Activated naive CD4-positive, alpha-beta T cell treated with anti-CD3 and anti-CD28 coated beads for 36 hours (primary cell): ENCODE measurements at regions of chr2 and their contacts with region 1.

Region 1: GRCh38 chr2:84870306-84870705 is 10.6 kb downstream of the TRABD2A start:
- DNase-seq: no peak
- H3K4me3 Mint-ChIP-seq: no peak overlapping the region
- H3K27ac Mint-ChIP-seq: peak overlapping the region; percentile 6
- H3K4me1 Mint-ChIP-seq: peaks cover 89% of the 10 kb centered on the region
- H3K27me3 Mint-ChIP-seq: no peaks in the 10 kb centered on the region

Region 2: GRCh38 chr2:84459018-84459943 is 411.0 kb before region 1 on chr2 and contains the start of gene SUCLG1:
- CTCF ChIA-PET with region 1: no interaction called
- intact Hi-C with region 1: no loop called
- DNase-seq: peak; percentile 89
- H3K4me3 Mint-ChIP-seq: peak within 1 kb of the TSS; percentile 86
- H3K27ac Mint-ChIP-seq: peak within 1 kb of the TSS; percentile 92
- H3K4me1 Mint-ChIP-seq: peaks cover 40% of the 10 kb centered on the region
- H3K27me3 Mint-ChIP-seq: no peaks in the 10 kb centered on the region
- total RNA-seq, gene SUCLG1: 75.3 to 80.7 TPM

Region 3: DNA sequence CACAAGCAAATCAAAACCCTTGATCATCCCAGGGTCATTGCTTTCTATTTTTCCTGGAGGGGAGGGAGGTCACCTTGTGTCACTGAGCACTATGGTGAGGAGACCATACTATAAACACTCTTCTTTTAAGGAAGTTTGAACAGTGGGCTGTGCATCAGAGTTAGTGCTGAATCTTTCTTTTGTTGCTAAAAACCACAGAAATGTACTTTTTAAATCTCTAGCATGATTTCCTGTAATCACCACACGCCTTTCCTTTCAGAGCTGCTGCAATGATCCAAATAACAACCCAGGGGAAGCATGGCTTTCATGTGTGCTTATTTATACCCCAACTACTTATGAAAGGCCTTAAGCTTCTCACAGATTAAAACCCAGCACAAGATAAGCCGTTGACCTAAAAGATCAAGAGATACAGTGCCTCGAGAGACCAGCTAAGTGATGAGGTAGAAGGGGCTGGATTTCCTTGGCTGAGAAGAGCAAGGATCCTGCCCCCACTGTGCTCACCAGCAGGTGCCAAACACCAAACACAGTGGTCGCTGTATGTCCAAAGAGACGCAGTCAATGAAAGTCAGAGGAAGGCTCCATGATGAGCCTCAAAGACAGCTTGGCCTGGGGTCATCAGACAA is 24.2 kb before region 1 on chr2:
- CTCF ChIA-PET with region 1: interaction called, 13 read pairs
- intact Hi-C with region 1: loop called (anchors 1 kb)
- DNase-seq: peak; percentile 66
- H3K4me3 Mint-ChIP-seq: peak overlapping the region; percentile 78
- H3K27ac Mint-ChIP-seq: peak overlapping the region; percentile 99
- H3K4me1 Mint-ChIP-seq: peaks cover 95% of the 10 kb centered on the region
- H3K27me3 Mint-ChIP-seq: no peaks in the 10 kb centered on the region

Region 4: DNA sequence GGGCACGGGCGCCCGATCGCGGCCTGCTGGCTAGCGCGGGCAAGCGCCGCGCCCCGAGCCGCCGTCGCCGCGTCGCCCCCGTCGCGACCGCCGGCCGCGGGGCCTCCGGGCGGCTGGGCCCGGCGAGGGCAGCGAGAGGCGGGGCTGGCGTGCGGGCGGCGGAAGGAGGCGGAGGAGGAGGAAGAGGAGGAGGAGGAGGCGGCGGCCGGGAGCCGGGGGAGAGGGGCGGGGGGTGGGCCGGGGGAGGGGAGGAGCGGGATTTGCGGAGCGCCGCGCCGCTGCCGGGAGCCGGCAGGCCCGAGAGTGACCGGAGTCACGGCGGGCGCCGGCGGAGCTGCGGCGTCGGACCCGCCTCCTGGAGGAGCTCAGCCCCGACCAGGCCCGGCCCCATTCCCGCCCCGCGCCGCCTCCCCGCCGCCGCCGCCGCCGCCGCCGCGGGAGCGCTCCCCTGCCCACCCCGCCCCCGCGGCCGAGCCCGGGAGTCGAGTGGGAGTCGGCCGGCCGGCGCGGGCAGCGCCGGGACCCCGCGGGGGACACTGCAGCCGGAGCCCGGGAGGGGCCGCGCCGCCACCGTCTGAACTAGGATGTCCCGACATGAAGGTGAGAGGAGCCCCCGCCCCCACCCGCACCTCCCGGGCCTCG is 100.7 kb after region 1 on chr2 and contains the start of gene KCMF1:
- CTCF ChIA-PET with region 1: no interaction called
- intact Hi-C with region 1: no loop called
- DNase-seq: peak; percentile 80
- H3K4me3 Mint-ChIP-seq: peak within 1 kb of the TSS; percentile 98
- H3K27ac Mint-ChIP-seq: peak within 1 kb of the TSS; percentile 100
- H3K4me1 Mint-ChIP-seq: peaks cover 46% of the 10 kb centered on the region
- H3K27me3 Mint-ChIP-seq: no peaks in the 10 kb centered on the region
- total RNA-seq, gene KCMF1: 105 to 109 TPM